CD14-positive monocyte (primary cell): ENCODE measurements at regions of chr9 and their contacts with region 1.

Region 1: GRCh38 chr9:116456490-116457088 is 230.5 kb upstream of the TRIM32 start:
- DNase-seq: no peak
- H3K4me3 ChIP-seq: no peak overlapping the region
- H3K4me3 Mint-ChIP-seq: no peak overlapping the region
- H3K27ac ChIP-seq: no peak overlapping the region
- H3K27ac Mint-ChIP-seq: no peak overlapping the region
- H3K4me1 ChIP-seq: no peaks in the 10 kb centered on the region
- H3K4me1 Mint-ChIP-seq: no peaks in the 10 kb centered on the region
- H3K27me3 ChIP-seq: no peaks in the 10 kb centered on the region
- H3K27me3 Mint-ChIP-seq: peaks cover 0 to 2% (median 1%) of the 10 kb centered on the region in 3 donors
- CTCF ChIP-seq: no peak

Region 2: GRCh38 chr9:116432051-116432450 is 24.5 kb before region 1 on chr9:
- intact Hi-C with region 1: no loop called
- DNase-seq: no peak
- H3K4me3 ChIP-seq: no peak overlapping the region
- H3K4me3 Mint-ChIP-seq: no peak overlapping the region
- H3K27ac ChIP-seq: no peak overlapping the region
- H3K27ac Mint-ChIP-seq: no peak overlapping the region
- H3K4me1 ChIP-seq: no peaks in the 10 kb centered on the region
- H3K4me1 Mint-ChIP-seq: no peaks in the 10 kb centered on the region
- H3K27me3 ChIP-seq: no peaks in the 10 kb centered on the region
- H3K27me3 Mint-ChIP-seq: no peaks in the 10 kb centered on the region
- CTCF ChIP-seq: no peak

Region 3: GRCh38 chr9:116516456-116516855 is 59.9 kb after region 1 on chr9:
- intact Hi-C with region 1: no loop called
- DNase-seq: no peak
- H3K4me3 ChIP-seq: no peak overlapping the region
- H3K4me3 Mint-ChIP-seq: no peak overlapping the region
- H3K27ac ChIP-seq: no peak overlapping the region
- H3K27ac Mint-ChIP-seq: no peak overlapping the region
- H3K4me1 ChIP-seq: no peaks in the 10 kb centered on the region
- H3K4me1 Mint-ChIP-seq: no peaks in the 10 kb centered on the region
- H3K27me3 ChIP-seq: no peaks in the 10 kb centered on the region
- H3K27me3 Mint-ChIP-seq: peaks cover 2 to 6% (median 5%) of the 10 kb centered on the region in 3 donors
- CTCF ChIP-seq: no peak

Region 4: DNA sequence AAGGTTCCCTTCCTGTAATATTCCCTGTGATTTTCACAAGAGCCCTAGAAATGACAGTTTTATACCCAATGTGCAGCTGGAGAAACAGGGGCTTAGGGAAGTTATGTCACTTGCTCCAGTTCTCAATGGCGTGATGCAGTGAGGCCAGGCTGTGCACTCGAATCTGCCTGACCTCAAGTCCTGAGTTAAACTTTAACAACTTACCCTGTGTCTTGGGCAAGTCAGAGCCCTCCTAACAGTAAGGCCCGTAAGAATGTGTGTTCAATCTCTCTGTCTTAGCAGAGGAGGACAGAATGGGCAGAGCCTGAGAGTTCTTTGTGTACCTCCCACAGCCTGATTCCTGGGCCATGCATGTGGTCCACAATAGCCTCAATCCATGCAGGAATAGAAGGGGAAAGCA is 411.6 kb after region 1 on chr9:
- intact Hi-C with region 1: loop called in 1 of 2 experiments (anchors 5 kb)
- DNase-seq: no peak
- H3K4me3 ChIP-seq: no peak overlapping the region
- H3K4me3 Mint-ChIP-seq: no peak overlapping the region
- H3K27ac ChIP-seq: no peak overlapping the region
- H3K27ac Mint-ChIP-seq: no peak overlapping the region
- H3K4me1 ChIP-seq: no peaks in the 10 kb centered on the region
- H3K4me1 Mint-ChIP-seq: no peaks in the 10 kb centered on the region
- H3K27me3 ChIP-seq: no peaks in the 10 kb centered on the region
- H3K27me3 Mint-ChIP-seq: peaks cover 0 to 7% (median 1%) of the 10 kb centered on the region in 3 donors
- CTCF ChIP-seq: no peak